WTC11 (cell line): ENCODE measurements at regions of chr7 and their contacts with region 1.

Region 1: GRCh38 chr7:43454936-43455518 is 127.9 kb upstream of the STK17A start:
- DNase-seq: no peak
- ATAC-seq: peak; percentile 70
- H3K4me3 Mint-ChIP-seq: no peak overlapping the region
- H3K27ac Mint-ChIP-seq: peak overlapping the region; percentile 61; the same call in 1 of the 2 replicates
- H3K4me1 Mint-ChIP-seq: peaks cover 19% of the 10 kb centered on the region
- H3K27me3 Mint-ChIP-seq: no peaks in the 10 kb centered on the region
- CTCF ChIP-seq: peak; percentile 39; the same call in 1 of the 2 replicates

Region 2: GRCh38 chr7:43337191-43337590 is 117.8 kb before region 1 on chr7:
- CTCF ChIA-PET with region 1: no interaction called
- POLR2A ChIA-PET with region 1: no interaction called
- DNase-seq: no peak
- ATAC-seq: no peak
- H3K4me3 Mint-ChIP-seq: no peak overlapping the region
- H3K27ac Mint-ChIP-seq: no peak overlapping the region
- H3K4me1 Mint-ChIP-seq: peaks cover 16% of the 10 kb centered on the region
- H3K27me3 Mint-ChIP-seq: no peaks in the 10 kb centered on the region
- CTCF ChIP-seq: no peak

Region 3: DNA sequence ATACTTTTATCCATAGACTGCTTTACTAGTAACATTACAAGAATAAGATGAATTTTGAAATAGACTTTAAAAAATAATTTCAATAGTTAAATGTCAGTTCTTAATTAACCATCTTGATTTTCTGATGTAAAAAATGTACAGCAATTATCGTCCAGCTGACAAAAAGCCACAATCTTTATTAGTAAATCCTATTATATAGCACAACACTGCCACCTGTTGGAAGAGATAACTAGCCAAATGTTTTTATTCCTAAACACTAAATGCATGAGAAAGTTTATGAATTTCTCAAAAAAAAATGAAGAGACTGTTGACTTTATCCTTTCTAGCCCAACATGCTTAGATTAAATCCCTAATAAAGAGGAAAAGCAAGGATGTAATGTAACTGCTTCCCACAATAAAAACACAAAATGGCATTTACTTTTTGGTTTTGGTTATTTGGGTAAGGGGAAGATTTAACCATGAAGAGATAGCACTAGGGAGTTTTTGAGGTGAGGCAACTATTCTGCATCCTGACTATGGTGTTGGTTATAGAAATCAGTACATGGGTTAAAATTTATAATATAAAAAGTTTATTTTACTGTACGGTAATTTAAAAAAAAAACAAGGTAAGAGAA is 266.3 kb after region 1 on chr7:
- CTCF ChIA-PET with region 1: interaction called, 10 read pairs
- POLR2A ChIA-PET with region 1: no interaction called
- DNase-seq: no peak
- ATAC-seq: no peak
- H3K4me3 Mint-ChIP-seq: no peak overlapping the region
- H3K27ac Mint-ChIP-seq: peak overlapping the region; percentile 79; the same call in 1 of the 2 replicates
- H3K4me1 Mint-ChIP-seq: peaks cover 7% of the 10 kb centered on the region
- H3K27me3 Mint-ChIP-seq: no peaks in the 10 kb centered on the region
- CTCF ChIP-seq: no peak; the same call in 1 of the 2 replicates